Right ventricle myocardium inferior (tissue), 1 donor: ENCODE measurements at regions of chr1 and their contacts with region 1.

Region 1: DNA sequence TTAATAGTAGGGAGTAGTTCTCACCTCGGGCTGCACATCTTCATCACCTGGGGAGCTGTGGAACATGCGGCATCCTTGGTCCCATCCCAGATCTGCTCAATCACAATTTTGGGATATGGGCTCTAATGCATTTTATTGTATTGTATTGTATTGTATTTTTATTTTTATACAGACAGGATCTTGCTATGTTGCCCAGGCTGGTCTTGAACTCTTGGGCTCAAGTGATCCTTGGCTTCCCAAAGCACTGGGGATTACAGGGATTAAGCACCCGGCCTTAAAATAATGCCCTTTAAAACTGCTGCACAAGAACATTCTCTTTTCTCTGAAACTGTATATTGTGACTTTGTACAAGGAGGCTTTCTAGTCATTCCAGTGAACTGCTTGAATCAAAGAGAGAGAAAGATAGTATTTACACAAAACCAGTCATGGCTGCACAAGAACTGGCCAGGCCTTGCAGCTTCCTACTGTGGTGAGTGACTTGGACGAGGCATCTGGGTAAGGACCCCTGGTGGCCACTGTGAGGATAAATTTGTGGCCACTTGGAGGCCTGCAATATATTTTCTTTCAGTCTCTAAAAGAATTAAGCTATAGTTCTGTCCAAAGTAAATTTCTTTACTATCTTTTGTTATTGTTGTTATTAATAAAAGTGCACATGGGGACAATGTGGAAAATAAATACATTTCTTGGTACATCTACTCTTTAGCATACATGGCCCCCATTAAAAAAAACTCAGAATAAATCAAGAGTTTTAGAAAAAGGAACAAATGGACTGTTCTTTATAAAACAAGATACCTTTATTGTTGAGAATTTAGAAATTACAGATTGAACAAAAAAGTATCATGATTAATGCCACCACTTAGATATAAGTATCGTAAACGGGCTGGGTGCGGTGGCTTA is 48.0 kb downstream of the TBCE start:
- DNase-seq: no peak
- ATAC-seq: peak; percentile 61

Region 2: GRCh38 chr1:234486498-234487448 is 928.5 kb before region 1 on chr1:
- intact Hi-C with region 1: loop called (anchors 10 kb)
- DNase-seq: no peak
- ATAC-seq: peak; percentile 87

Region 3: GRCh38 chr1:235105051-235106043 is 309.9 kb before region 1 on chr1:
- intact Hi-C with region 1: loop called (anchors 10 kb)
- DNase-seq: no peak
- ATAC-seq: no peak

Region 4: GRCh38 chr1:235253219-235253962 is 161.9 kb before region 1 on chr1:
- intact Hi-C with region 1: loop called (anchors 1 kb)
- DNase-seq: no peak
- ATAC-seq: peak; percentile 90

Region 5: DNA sequence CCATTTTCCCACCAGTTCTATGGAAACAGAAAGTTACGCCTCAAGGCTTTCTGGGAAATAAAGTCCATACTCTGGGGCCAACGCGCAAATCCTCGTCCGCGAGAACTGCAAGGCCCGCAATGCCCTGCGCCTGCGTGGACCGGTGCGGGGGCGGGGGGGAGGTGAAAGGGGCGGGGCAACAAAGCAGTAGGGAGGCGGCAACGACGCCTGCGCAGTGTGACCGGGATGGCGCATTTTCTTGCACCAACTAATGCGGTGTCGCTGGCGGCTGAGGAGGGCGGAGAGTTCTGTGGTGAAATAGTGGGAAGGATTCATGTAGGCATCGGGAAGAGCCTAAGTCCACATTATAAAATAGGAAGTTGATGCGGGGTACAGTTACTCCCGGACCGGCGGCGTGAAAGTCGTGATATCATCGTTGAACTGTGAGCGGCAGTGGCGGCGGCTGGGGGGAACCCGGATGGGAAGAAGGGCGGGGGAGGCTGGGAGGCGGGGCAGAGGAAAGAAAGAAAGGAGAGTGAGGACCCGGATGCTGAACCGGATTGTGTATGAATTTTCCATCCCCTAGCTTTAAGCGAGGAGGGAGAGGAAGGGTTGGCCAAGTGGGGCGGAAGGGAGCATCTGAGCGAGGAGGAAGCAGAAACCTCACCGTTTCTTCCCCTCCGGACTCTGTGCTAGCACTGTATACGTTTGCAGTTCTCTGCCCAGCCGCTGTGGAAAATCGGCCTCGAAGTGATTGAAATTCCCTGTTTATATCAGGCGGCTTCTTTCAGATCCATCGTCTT is 86.7 kb before region 1 on chr1 and contains the start of gene GGPS1:
- intact Hi-C with region 1: loop called (anchors 10 kb)
- DNase-seq: peak; percentile 99
- ATAC-seq: peak; percentile 94
- total RNA-seq, gene GGPS1: 33.1 TPM